Aorta (tissue), 5 donors: ENCODE measurements at regions of chr10 and their contacts with region 1.

Region 1: GRCh38 chr10:22714479-22715289 is at the start of gene PIP4K2A:
- DNase-seq: peak; percentile 86 to 91
- ATAC-seq: peak; percentile 85
- H3K4me3 ChIP-seq: peak within 1 kb of the TSS; percentile 73 to 96
- H3K27ac ChIP-seq: peak within 1 kb of the TSS; percentile 52 to 91
- H3K4me1 ChIP-seq: peaks cover 0 to 3% of the 10 kb centered on the region in 2 donors
- H3K27me3 ChIP-seq: no peaks in the 10 kb centered on the region
- total RNA-seq, gene PIP4K2A: 77.9 to 90.3 TPM

Region 2: GRCh38 chr10:22427890-22428571 is 286.7 kb before region 1 on chr10:
- intact Hi-C with region 1: loop called (anchors 10 kb)
- DNase-seq: no peak
- ATAC-seq: no peak
- H3K4me3 ChIP-seq: no peak overlapping the region
- H3K27ac ChIP-seq: no peak overlapping the region
- H3K4me1 ChIP-seq: no peaks in the 10 kb centered on the region
- H3K27me3 ChIP-seq: no peaks in the 10 kb centered on the region

Region 3: DNA sequence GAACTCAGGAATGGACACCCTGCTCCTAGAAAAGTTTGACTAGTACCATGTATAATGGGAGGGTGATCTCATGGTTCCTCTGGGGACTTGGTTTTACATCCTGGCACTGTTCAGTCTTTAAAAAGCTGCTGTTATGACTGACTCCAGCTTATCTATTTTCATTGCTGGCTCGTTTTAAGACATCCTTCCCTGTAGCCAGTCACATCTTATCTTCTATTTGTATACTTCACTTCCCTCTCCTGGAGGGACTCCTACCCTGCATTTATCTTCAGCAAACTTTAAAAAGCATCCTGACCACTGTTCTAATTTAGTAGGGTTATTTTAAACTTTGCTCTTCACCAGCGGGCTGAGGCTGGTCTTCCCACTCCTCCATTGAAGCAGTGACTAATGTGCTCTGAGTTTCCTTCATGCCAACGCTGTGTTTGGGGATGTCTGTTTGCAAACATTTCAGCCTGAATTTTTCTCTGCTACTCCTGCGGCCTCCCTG is 140.3 kb after region 1 on chr10:
- intact Hi-C with region 1: loop called in 1 of 2 experiments (anchors 10 kb)
- DNase-seq: no peak
- ATAC-seq: peak; percentile 71
- H3K4me3 ChIP-seq: no peak overlapping the region
- H3K27ac ChIP-seq: peak overlapping the region in 1 of 2 donors; percentile 24
- H3K4me1 ChIP-seq: peaks cover 0 to 2% of the 10 kb centered on the region in 2 donors
- H3K27me3 ChIP-seq: no peaks in the 10 kb centered on the region